Cardiac septum (tissue), 1 donor: ENCODE measurements at regions of chr5 and their contacts with region 1.

Region 1: DNA sequence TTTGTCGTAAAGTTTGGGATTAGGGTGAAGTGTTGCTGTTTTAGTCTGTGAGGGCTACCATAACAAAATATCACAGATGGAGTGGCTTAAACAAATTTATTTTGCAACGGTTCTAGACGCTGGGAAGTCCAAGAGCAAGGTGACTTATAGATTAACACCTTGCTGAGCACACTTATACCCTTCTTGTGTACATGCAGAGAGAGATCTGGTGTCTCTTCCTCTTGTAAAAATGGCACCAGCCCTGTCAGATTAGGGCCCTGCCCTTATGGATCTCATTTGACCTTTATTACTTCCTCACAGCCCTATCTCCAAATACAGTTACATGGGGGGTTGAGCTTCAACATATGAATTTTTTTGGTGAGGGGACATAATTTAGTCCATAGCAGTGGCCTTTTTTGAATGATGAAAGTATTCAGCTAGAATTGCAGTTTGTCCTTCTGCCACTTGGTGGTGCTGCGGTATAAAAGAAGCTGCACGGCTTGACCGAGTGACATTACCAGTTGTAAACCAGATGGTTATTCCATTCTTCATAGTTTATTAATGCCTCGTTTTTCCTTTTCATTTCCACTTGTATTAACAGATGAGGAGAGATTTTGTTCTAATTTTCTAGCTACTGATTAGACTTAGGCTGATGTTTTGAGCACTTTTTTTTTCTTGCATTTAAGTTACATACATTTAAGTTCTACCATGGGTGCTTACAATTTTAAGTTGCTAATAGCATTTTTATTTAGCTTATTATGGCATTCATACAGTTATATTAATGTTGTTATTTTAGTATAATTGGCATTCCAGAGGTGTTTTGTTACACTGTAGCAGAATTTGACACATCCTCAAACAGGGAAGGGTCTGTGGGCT is 19.4 kb downstream of the DCP2 start:
- DNase-seq: peak; percentile 77

Region 2: DNA sequence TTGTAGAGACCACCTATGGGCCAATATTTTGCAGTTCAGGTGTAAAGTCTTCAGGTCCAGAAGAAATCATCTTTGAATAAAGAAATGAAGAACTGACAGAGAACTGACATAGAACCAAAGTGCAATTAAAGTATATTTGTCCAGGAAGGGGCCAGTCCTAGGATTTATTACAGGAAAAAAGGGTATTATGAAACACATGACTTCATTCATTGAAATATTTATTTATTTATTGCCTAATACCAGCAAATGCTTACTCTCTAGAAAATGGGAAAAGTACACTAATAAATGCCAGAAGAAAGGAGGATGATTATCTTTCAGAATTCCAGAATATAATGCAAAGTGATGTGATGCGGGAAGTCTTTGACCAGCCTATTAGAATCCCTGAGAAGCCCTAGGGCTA is 683.2 kb before region 1 on chr5:
- intact Hi-C with region 1: no loop called
- DNase-seq: no peak

Region 3: GRCh38 chr5:112976432-112977309 is 19.3 kb before region 1 on chr5 and contains the start of gene DCP2:
- intact Hi-C with region 1: no loop called
- DNase-seq: peak; percentile 97
- total RNA-seq, gene DCP2: 21.8 TPM

Region 4: DNA sequence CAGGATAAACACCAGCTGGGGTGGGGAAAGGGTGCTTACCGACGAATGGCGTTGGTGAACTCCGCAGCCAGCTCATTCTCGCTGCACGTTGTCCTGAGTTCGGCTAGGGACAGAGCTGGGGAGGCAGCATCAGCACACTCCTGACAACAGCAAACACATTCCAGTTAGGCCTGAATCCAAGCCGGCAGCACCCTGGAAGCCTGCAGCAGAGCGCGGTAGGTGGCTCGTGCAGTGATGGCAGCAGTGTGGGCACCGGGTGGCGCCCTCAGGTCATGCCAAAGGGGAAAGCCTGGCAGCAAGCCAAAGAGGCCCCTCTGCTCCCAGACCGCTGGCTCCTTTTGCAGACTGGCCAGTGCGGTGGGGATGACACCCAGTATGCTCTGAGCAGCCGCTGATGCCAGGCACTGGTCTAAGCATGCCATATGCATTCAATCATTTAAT is 47.5 kb after region 1 on chr5:
- intact Hi-C with region 1: loop called (anchors 5 kb)
- DNase-seq: peak; percentile 82

Region 5: DNA sequence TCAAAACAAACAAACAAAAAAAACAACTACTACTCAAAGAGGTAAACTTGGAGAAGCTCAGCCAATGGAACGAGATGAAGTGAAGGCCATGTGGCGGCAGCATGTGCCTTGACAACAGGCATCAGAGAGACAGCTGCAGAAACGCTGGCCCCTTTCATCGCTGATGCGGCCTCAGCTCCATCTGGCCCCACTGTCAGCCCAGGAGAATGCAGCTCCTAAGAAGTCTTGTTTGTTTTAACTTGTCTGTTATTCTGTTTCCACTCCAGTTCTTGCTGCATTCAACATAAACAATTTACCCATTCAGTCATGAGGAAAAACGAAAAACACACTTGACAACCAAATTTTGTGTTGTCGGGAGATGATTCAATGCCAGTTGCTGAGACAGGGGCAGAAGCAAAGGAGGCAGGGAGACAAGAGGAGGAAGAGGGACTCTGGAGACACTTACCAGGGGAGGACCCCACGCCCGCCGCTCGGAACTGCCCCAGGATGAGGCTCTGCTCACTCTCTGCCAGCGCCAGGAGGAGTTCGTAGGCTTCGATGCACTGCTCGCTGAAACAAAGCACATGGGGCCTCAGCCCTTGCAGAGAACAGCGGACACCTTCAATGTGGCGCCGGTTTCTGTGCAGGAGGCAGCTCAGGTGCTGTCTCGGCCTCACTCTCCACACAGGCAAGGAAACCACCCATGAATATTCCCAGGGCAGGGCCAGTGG is 71.8 kb after region 1 on chr5:
- intact Hi-C with region 1: no loop called
- DNase-seq: no peak

Region 6: GRCh38 chr5:113330533-113331208 is 334.7 kb after region 1 on chr5:
- intact Hi-C with region 1: loop called (anchors 5 kb)
- DNase-seq: no peak

Region 7: GRCh38 chr5:113378959-113379541 is 383.1 kb after region 1 on chr5:
- intact Hi-C with region 1: loop called (anchors 5 kb)
- DNase-seq: no peak

Region 8: GRCh38 chr5:113463032-113463431 is 467.0 kb after region 1 on chr5:
- intact Hi-C with region 1: no loop called
- DNase-seq: no peak

Region 9: DNA sequence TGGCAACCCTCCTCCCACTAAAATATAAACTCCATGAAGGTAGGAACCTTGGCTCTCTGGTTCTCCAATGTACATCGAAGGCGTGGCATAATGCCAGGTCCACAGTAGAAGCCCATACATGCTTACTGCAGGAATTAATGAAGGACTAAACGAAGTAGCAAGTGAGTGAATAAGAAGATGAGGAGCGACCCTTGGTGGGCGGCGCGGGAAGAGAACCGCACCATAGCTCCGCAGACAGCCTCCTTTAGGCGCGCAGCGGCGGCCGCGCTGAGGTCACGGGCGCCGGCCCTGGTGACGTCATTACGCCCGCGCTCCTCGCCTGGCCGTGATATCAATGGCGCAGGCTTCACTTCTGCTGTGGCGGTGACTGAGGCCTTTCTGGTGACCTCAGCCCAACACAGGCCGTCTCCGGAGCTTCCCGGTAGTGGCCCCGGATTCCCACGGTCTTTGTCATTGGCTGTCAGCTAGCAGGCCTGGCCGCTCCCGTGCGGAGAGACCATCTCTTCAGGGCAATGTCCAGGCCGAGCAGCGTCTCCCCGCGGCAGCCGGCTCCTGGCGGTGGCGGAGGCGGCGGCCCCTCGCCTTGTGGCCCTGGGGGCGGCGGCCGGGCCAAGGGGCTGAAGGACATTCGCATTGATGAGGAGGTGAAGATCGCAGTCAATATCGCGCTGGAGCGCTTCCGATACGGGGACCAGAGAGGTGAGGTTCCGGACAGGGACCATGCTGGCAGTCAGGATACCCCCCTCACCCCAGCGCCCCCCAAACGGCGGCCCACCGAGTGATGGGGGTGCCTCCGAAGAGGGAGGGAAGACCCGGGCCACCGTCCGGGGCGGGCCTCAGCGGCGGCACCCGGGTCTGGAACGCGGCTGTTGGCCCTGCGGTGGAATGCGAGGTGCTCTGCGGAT is 517.6 kb after region 1 on chr5 and contains the start of gene YTHDC2:
- intact Hi-C with region 1: loop called (anchors 5 kb)
- DNase-seq: peak; percentile 94
- total RNA-seq, gene YTHDC2: 15.6 TPM

Region 10: DNA sequence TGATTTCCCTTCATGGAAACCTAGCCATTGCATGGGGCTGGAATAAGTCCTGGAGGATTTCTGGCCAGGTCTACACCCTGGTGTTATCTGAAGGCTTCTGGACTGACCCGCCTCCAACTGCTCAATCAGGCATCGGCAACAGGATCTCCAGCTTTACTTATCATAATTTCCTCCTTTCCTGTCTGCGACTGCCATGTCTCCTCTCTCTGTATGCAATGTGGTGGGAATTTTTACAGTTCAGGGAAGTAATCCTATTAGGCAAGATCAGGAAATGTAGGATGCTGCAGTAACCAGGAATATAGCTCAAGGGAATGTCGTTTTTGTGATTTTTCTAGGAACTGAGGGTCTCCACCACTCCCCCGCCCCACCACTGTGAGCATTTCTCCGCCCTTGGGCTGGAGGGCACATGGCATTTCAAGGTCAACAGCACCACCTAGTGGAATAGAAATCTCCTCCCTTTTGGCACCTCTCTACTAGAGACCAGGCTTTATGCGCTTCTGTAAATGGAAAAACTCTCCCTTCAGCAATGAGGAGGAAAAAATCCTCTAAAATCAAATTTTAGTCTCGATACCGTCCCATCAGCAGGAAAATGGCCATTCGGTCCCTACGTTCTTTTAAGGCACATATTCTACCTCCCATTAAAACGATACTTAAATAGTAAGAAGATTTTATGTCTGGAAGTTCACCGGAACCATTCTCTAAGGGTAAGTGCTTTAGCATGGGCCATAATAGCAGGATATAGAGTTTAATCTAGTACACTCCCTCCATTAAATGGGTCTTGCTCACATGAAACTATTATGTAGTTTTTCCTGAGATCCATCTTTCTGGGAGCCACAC is 610.5 kb after region 1 on chr5:
- intact Hi-C with region 1: loop called (anchors 2 kb)
- DNase-seq: no peak